ENCODE measurements at regions of chr3 and their contacts with region 1.

Region 1: GRCh38 chr3:50078622-50079021 is 10.1 kb upstream of the RBM5 start:
- DNase-seq: no peak

Region 2: DNA sequence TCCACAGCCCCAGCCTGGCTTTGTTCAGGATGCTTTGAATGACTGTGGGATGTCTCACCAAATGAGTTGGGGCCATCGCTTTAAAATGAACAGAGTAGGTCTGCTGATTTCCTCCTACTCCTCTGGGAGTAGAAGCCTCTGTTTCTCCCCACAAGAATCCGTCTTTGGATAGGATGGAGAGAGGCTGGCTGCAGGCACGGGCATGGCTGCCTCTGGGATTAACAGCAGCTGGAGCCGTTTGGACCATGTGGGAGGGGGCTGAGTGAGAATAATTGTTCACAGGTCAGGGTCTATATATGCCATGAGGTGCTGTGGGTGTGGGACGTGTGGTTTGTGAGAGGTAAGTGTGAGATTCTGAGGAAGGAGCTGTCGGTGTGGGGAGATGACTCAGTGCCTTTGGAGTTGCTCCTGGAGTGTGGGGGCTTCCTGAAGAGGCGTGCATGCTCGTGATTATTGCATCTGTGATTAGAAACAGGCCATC is 452.5 kb before region 1 on chr3:
- intact Hi-C with region 1: no loop called
- DNase-seq: no peak

Region 3: GRCh38 chr3:50008931-50009330 is 69.7 kb before region 1 on chr3:
- intact Hi-C with region 1: no loop called
- DNase-seq: no peak

Region 4: DNA sequence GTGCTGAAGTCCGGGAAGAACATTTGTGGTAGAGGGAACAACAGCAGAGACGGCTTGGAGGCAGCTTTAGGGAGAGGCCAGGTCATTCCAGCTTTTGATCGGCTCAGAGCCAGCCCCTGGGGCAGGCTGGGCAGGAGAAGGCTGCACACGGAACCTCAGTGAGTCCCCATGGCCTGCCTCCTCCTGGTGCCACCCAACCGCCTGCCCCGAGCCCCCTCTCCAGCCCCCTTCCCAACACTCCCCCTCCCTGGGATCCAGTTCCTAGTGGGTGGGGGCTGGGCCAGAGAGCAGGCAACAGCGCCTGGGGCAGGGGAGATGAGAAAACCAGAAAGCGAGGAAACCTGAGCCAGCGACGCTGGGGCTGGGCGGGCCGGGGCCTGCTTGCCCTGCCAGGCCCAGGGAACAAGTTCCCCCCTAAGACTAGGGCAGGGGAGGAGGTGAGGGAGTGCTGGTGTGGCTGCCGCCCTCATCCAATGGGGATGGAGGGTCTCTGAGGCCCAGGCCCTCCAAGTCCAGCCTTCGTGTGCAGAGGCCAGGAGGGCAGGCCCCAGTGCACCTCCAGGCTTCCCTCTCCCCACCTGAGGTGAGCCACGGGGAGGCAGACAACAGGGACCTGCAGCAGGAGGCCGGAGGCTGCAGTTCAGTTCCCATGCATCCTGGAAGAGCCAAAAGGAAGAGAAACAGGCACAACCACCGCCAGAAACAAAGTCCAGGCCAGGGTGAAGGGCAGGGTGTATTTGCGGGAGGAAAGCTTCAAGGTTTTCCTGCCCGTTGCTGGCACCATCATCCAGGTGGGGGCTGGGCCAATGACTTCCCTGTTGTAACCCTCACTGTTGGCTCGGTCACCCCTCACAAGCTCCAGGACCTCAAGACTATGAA is 72.4 kb after region 1 on chr3:
- intact Hi-C with region 1: loop called in 1 of 2 experiments (anchors 2 kb)
- DNase-seq: no peak

Measured in posterior vena cava (tissue), 2 donors.